ENCODE measurements at regions of chr2 and their contacts with region 1.

Region 1: DNA sequence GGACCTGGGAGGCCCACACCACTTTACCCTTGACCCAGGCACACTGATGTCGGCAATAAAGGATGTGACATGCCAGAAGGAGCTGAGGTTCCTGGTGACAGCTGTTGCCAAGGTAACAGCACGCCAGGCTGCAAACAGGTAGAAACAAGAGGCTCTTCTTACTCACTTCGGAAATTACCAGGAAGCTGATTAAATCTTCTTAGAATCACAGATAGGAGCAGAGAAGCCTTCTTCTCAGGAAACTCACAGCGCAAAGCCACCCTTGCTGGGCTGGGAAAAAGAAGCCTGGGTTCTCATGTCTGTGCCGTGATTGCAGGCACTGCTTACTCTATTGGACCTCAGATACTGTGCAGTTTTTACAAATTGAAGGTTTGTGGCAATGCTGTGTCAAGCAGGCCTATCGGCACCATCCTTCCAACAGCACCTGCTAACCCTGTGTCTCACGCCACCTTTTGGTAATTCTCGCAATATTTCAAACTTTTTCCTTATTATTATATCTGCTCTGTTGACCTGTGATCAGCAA is 61.0 kb upstream of the TAF1B start:
- DNase-seq: peak in 34 of 35 experiments; percentile 32 to 86 (median 60)
- ATAC-seq: peak; percentile 77 to 85 (median 78)
- H3K4me3 ChIP-seq: no peak overlapping the region
- H3K4me3 Mint-ChIP-seq: peak overlapping the region; percentile 4 to 23 (median 21)
- H3K27ac ChIP-seq: peak overlapping the region; percentile 96
- H3K27ac Mint-ChIP-seq: peak overlapping the region; percentile 80 to 91
- H3K4me1 ChIP-seq: peaks cover 29 to 64% of the 10 kb centered on the region in 2 experiments
- H3K4me1 Mint-ChIP-seq: peaks cover 42 to 64% (median 52%) of the 10 kb centered on the region in 3 donors
- H3K27me3 ChIP-seq: no peaks in the 10 kb centered on the region
- H3K27me3 Mint-ChIP-seq: no peaks in the 10 kb centered on the region

Region 2: GRCh38 chr2:10448208-10448645 is 666.0 kb after region 1 on chr2 and contains the start of gene ODC1:
- CTCF ChIA-PET with region 1: no interaction called
- POLR2A ChIA-PET with region 1: interaction called in 1 of 2 experiments, 17 read pairs
- DNase-seq: peak; percentile 91 to 99 (median 95)
- ATAC-seq: peak; percentile 86 to 91 (median 87)
- H3K4me3 ChIP-seq: peak within 1 kb of the TSS; percentile 60 to 64
- H3K4me3 Mint-ChIP-seq: peak within 1 kb of the TSS; percentile 79 to 85 (median 81)
- H3K27ac ChIP-seq: peak within 1 kb of the TSS; percentile 96
- H3K27ac Mint-ChIP-seq: peak within 1 kb of the TSS; percentile 81 to 86
- H3K4me1 ChIP-seq: peaks cover 6 to 33% of the 10 kb centered on the region in 2 experiments
- H3K4me1 Mint-ChIP-seq: peaks cover 16 to 41% (median 41%) of the 10 kb centered on the region in 3 donors
- H3K27me3 ChIP-seq: no peaks in the 10 kb centered on the region
- H3K27me3 Mint-ChIP-seq: no peaks in the 10 kb centered on the region
- total RNA-seq, gene ODC1: 40.6 to 102 (median 53.3) TPM